ENCODE measurements at regions of chr19 and their contacts with region 1.

Region 1: DNA sequence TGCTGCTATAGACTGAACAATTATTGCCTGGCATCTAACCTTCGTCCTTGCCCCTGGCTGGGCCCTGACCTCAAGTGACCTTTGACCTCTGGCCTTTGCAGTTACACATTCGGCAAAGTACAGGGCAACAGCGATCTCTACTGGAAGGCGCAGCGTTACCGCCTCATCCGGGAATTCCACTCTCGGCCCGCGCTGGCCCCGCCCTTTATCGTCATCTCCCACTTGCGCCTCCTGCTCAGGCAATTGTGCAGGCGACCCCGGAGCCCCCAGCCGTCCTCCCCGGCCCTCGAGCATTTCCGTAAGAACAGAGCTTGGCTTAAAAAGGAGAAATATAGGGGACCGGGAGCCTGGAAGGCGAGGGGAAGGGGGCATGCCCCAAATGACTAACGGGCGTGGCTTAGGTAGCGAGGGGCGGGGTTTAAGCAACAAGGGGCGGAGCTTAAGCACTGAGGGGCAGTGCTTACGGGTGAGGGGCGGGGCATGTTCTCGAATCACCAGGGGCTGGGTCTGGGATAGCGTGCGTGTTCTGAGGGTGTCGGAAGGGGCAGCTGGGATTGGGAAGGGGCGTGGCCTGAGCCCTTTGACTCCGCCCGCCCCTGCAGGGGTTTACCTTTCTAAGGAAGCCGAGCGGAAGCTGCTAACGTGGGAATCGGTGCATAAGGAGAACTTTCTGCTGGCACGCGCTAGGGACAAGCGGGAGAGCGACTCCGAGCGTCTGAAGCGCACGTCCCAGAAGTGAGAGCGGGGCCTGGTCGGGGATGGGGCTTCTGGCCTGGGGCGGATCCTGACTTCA is 52.7 kb downstream of the TRPM4 start:
- DNase-seq: peak in 1 of 2 experiments; percentile 69
- ATAC-seq: peak; percentile 27 to 57; a peak in 3 of 6 replicates
- H3K4me3 ChIP-seq: no peak overlapping the region
- H3K27ac ChIP-seq: no peak overlapping the region
- H3K4me1 ChIP-seq: 0 out of 3 replicates have a peak, but pooled peaks cover 3% of the 10 kb centered on the region
- CTCF ChIP-seq: no peak
- EP300 ChIP-seq: no peak
- POLR2A ChIP-seq: no peak
- RAD21 ChIP-seq: no peak

Region 2: GRCh38 chr19:49073514-49074378 is 136.6 kb before region 1 on chr19:
- CTCF ChIA-PET with region 1: interaction called, 28 read pairs
- POLR2A ChIA-PET with region 1: no interaction called
- DNase-seq: peak; percentile 65 to 73
- ATAC-seq: peak; percentile 77 to 86
- H3K4me3 ChIP-seq: peak overlapping the region; percentile 6; the same call in 1 of the 3 replicates
- H3K27ac ChIP-seq: 0 out of 6 replicates have a peak overlapping the region, but pooled peaks of 1 of the 2 experiments have one; percentile 9
- H3K4me1 ChIP-seq: peaks cover 16% of the 10 kb centered on the region
- CTCF ChIP-seq: peak; percentile 62
- EP300 ChIP-seq: no peak
- POLR2A ChIP-seq: no peak
- RAD21 ChIP-seq: peak; percentile 40 to 66; a peak in 4 of 5 replicates

Region 3: GRCh38 chr19:49106648-49107135 is 103.6 kb before region 1 on chr19:
- CTCF ChIA-PET with region 1: interaction called, 10 read pairs
- POLR2A ChIA-PET with region 1: no interaction called
- DNase-seq: peak; percentile 69 to 87
- ATAC-seq: peak; percentile 63 to 80
- H3K4me3 ChIP-seq: no peak overlapping the region
- H3K27ac ChIP-seq: peak overlapping the region in 1 of 2 experiments; percentile 51; a peak in 4 of 6 replicates
- H3K4me1 ChIP-seq: peaks cover 18% of the 10 kb centered on the region
- CTCF ChIP-seq: peak; percentile 93
- EP300 ChIP-seq: no peak
- POLR2A ChIP-seq: no peak
- RAD21 ChIP-seq: peak; percentile 40 to 45; a peak in 4 of 5 replicates

Region 4: DNA sequence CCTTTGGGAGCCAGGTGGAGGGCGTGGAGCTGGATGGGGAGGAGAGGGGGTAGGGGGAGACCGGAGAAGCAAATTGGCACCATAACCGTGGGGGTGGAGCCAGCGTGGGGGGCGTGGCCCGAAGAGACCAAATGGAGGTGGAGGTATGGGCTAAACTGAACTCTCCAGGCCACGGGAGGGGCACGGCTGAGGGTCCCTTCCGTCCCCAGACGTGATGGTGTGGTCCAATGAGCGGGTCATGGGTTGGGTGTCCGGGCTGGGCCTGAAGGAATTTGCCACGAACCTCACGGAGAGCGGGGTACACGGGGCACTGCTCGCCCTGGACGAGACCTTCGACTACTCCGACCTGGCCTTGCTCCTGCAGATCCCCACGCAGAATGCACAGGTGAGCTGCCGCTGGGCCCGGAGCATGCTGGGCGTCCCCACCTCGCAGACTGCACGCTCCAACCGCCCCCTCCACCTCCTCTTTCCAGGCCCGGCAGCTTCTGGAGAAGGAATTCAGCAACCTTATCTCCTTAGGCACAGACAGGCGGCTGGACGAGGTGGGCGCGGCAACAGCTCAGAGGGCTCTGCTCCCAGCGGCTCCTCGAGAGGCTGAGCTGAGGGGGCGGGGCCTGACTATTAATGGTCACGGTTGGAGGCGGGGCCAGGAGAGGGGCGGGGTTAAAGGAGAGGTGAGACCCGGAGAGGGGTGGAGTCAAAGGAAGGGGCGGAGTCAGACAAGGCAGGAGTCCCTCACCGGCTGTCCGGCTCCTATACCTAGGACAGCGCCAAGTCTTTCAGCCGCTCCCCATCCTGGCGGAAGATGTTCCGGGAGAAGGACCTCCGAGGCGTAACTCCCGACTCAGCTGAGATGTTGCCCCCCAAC is 61.3 kb before region 1 on chr19:
- CTCF ChIA-PET with region 1: interaction called, 25 read pairs
- POLR2A ChIA-PET with region 1: no interaction called
- DNase-seq: peak; percentile 96 to 98
- ATAC-seq: peak; percentile 32 to 71
- H3K4me3 ChIP-seq: peak overlapping the region; percentile 68
- H3K27ac ChIP-seq: peak overlapping the region; percentile 76 to 83
- H3K4me1 ChIP-seq: peaks cover 31% of the 10 kb centered on the region
- CTCF ChIP-seq: no peak
- EP300 ChIP-seq: no peak
- POLR2A ChIP-seq: peak; percentile 33; the same call in 1 of the 2 replicates
- RAD21 ChIP-seq: no peak

Region 5: DNA sequence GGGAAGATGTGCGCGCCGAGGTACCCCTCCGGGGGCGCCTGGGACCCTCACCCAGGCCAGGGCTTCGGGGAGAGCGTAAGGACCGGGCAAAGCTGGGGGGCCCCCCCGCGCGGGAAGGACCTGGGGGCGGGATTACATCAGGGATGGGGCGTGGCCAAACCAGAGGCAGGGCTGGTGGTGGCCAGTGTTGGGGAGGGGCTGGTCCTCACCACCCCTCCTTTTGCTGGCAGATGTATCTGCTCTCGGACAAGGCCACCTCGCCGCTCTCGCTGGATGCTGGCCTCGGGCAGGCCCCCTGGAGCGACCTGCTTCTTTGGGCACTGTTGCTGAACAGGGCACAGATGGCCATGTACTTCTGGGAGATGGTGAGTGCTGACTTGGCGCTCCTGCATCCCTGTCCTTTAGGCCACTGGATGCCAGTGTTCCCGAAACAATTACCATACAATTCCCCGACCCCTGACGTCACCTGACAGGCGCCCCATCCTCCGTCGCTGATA is 27.4 kb before region 1 on chr19:
- CTCF ChIA-PET with region 1: interaction called, 25 read pairs
- POLR2A ChIA-PET with region 1: no interaction called
- DNase-seq: no peak
- ATAC-seq: no peak
- H3K4me3 ChIP-seq: no peak overlapping the region
- H3K27ac ChIP-seq: no peak overlapping the region
- H3K4me1 ChIP-seq: no peaks in the 10 kb centered on the region
- CTCF ChIP-seq: no peak
- EP300 ChIP-seq: no peak
- POLR2A ChIP-seq: no peak
- RAD21 ChIP-seq: no peak

Region 6: GRCh38 chr19:49287141-49287770 is 77.0 kb after region 1 on chr19:
- CTCF ChIA-PET with region 1: no interaction called
- POLR2A ChIA-PET with region 1: no interaction called
- DNase-seq: no peak
- ATAC-seq: no peak
- H3K4me3 ChIP-seq: no peak overlapping the region
- H3K27ac ChIP-seq: no peak overlapping the region
- H3K4me1 ChIP-seq: no peaks in the 10 kb centered on the region
- CTCF ChIP-seq: no peak
- EP300 ChIP-seq: no peak
- POLR2A ChIP-seq: no peak
- RAD21 ChIP-seq: no peak

Measured in A549 (cell line).